T-cell (primary cell): ENCODE measurements at regions of chr4 and their contacts with region 1.

Region 1: DNA sequence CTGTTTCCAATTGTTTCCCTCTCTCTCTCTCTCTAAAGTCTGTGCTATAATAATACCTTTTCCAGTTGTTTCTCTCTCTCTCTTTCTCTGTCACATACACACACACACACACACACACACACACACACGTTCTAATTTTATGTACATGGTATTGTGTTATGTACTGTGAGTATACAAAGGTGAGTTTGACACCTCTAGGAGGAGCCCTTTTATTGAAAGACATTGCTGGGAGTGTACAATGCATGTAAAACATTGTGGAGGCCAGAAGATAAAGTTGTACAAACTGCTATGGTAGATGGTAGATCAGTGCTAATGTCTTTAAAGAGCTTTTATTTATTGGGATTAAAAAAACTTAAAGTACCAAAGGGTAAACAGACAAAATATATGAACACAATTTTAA is 53.6 kb downstream of the BLTP1 start:
- DNase-seq: peak in 1 of 35 experiments; percentile 8
- ATAC-seq: no peak
- H3K4me3 ChIP-seq: no peak overlapping the region
- H3K4me3 Mint-ChIP-seq: no peak overlapping the region
- H3K27ac ChIP-seq: no peak overlapping the region
- H3K27ac Mint-ChIP-seq: no peak overlapping the region
- H3K4me1 ChIP-seq: no peaks in the 10 kb centered on the region
- H3K4me1 Mint-ChIP-seq: peaks cover 0 to under 1% (median 0%) of the 10 kb centered on the region in 3 donors
- H3K27me3 ChIP-seq: no peaks in the 10 kb centered on the region
- H3K27me3 Mint-ChIP-seq: no peaks in the 10 kb centered on the region

Region 2: DNA sequence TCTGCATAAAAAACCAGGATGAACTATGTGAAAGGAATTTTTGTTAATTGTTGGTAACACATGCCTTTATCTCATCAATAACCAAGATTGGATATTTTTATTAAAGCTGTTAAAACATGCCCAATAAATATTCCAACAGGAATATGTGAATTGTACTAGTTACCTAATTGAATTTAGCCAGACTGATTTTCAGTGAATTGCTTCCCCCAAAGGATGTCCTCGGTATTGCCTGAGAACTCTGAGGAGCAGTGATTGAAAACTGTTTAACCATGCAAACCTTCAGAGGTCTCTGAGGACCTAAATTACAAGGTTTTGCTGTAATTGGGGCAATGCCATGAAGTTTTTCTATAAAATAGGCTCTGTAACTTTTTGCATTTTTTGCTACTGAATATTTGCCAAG is 13.1 kb after region 1 on chr4:
- CTCF ChIA-PET with region 1: interaction called in 1 of 2 experiments, 4 read pairs
- POLR2A ChIA-PET with region 1: interaction called in 1 of 2 experiments, 10 read pairs
- DNase-seq: peak in 1 of 35 experiments; percentile 34
- ATAC-seq: no peak
- H3K4me3 ChIP-seq: no peak overlapping the region
- H3K4me3 Mint-ChIP-seq: no peak overlapping the region
- H3K27ac ChIP-seq: no peak overlapping the region
- H3K27ac Mint-ChIP-seq: no peak overlapping the region
- H3K4me1 ChIP-seq: peaks cover 0 to 5% of the 10 kb centered on the region in 2 experiments
- H3K4me1 Mint-ChIP-seq: peaks cover 29 to 42% (median 32%) of the 10 kb centered on the region in 3 donors
- H3K27me3 ChIP-seq: no peaks in the 10 kb centered on the region
- H3K27me3 Mint-ChIP-seq: no peaks in the 10 kb centered on the region